ENCODE measurements at regions of chr5 and their contacts with region 1.

Region 1: GRCh38 chr5:171310819-171311697 is 2.0 kb downstream of the TLX3 start:
- DNase-seq: peak; percentile 69
- CTCF ChIP-seq: no peak

Region 2: DNA sequence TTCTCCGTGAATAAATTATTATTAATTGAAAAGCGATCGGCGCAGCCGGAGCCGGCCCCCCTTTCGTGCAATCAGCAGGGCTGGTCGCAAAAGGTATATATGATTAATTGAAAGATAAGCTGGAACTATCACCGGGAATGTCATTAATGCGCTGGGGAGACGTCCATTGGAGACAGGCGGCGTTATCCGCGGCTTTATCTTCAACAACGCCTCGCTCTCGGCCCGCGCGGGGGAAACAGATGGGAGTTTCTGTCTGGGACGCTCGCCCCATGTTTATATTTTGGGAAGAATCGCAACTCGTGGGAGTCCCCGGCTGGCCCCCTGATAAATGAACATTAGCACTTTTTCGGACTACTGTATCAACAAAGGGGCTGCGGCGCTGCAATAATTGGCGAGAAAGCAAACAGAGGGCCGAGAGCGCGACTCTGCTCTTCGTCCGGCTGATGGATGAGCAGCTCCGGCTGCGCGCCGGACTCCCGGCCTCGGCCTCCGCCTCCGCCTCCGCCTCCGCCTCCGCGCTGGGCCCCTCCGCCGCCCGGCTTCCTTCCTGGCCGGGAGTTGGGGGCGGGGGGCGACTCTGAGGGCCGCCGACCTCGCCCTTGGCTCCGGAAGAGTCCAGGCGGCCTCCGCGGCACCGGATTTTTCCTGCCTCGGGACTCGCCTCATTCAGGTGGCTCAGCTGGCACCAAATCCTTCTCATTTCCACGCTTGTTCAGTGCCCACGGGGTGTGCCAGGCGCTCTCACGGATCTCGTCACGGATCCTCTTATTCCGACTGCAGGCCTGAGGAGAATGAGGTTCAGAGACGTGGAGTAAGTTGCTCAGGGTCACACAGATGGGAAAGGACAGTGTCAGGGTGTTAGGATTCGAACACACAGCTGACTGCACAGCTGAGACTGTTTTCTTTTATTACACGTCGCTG is 1927.5 kb after region 1 on chr5:
- in situ Hi-C with region 1: loop called (anchors 25 kb)
- DNase-seq: peak; percentile 51
- CTCF ChIP-seq: no peak